ENCODE measurements at regions of chr15 and their contacts with region 1.

Region 1: GRCh38 chr15:95304151-95304946 is 1026.2 kb upstream of the NR2F2 start:
- DNase-seq: peak; percentile 98
- H3K4me3 ChIP-seq: no peak overlapping the region
- H3K27ac ChIP-seq: peak overlapping the region; percentile 97
- H3K4me1 ChIP-seq: peaks cover 52% of the 10 kb centered on the region
- H3K27me3 ChIP-seq: no peaks in the 10 kb centered on the region
- CTCF ChIP-seq: no peak
- POLR2A ChIP-seq: no peak

Region 2: DNA sequence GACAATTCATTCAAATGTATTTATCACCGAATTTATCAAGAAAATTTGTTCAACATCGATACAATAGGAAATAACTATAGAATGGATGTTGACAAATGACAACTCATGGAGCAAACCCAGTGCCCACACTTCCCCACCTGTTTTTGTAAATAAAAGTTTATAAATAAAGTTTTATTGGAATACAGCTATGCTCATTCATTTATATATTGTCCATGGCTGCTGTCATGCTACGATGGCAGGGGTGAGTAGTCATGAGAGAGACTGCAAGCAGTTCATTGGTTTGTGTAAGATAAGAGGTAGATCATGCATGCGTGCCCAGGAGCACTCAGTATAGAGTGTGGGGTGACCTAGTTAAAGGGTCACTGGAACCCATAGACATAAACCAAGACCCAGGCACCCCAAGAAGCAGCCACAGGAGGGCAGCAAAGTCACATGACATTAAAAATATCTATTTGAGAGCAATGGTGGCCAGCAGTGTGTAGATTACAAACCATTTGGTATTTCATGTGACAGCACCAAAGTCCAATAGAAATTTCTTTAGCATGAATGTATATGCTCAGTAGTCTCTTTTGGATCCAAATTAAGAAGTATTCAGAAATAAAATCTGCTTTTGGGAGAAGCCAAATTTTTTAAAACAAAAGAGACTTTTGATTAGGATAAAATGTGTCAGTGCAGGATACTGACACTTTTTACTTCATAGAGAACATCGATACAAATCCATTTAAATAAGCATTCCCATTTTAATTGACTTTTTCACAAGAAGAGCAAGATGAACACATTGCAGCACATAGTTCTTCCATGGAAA is 278.2 kb before region 1 on chr15:
- CTCF ChIA-PET with region 1: interaction called, 4 read pairs
- POLR2A ChIA-PET with region 1: no interaction called
- dilution Hi-C with region 1: no loop called
- intact Hi-C with region 1: loop called (anchors 2 kb)
- DNase-seq: peak; percentile 78
- H3K4me3 ChIP-seq: no peak overlapping the region
- H3K27ac ChIP-seq: no peak overlapping the region
- H3K4me1 ChIP-seq: peaks cover 2% of the 10 kb centered on the region
- H3K27me3 ChIP-seq: no peaks in the 10 kb centered on the region
- CTCF ChIP-seq: peak; percentile 62 to 76
- POLR2A ChIP-seq: no peak

Region 3: GRCh38 chr15:95291898-95292472 is 12.4 kb before region 1 on chr15:
- CTCF ChIA-PET with region 1: interaction called, 4 read pairs
- POLR2A ChIA-PET with region 1: interaction called, 3 read pairs
- dilution Hi-C with region 1: no loop called
- intact Hi-C with region 1: loop called (anchors 1 kb)
- DNase-seq: peak; percentile 61
- H3K4me3 ChIP-seq: no peak overlapping the region
- H3K27ac ChIP-seq: no peak overlapping the region
- H3K4me1 ChIP-seq: peaks cover 55% of the 10 kb centered on the region
- H3K27me3 ChIP-seq: no peaks in the 10 kb centered on the region
- CTCF ChIP-seq: peak; percentile 41 to 58
- POLR2A ChIP-seq: no peak

Region 4: GRCh38 chr15:95429345-95429744 is 125.0 kb after region 1 on chr15:
- CTCF ChIA-PET with region 1: no interaction called
- POLR2A ChIA-PET with region 1: no interaction called
- dilution Hi-C with region 1: no loop called
- intact Hi-C with region 1: no loop called
- DNase-seq: no peak
- H3K4me3 ChIP-seq: no peak overlapping the region
- H3K27ac ChIP-seq: no peak overlapping the region
- H3K4me1 ChIP-seq: no peaks in the 10 kb centered on the region
- H3K27me3 ChIP-seq: no peaks in the 10 kb centered on the region
- CTCF ChIP-seq: no peak
- POLR2A ChIP-seq: no peak

Region 5: GRCh38 chr15:95459273-95459672 is 154.9 kb after region 1 on chr15:
- CTCF ChIA-PET with region 1: no interaction called
- POLR2A ChIA-PET with region 1: no interaction called
- dilution Hi-C with region 1: no loop called
- intact Hi-C with region 1: loop called (anchors 1 kb)
- DNase-seq: peak; percentile 90
- H3K4me3 ChIP-seq: peak overlapping the region in 1 of 3 experiments; percentile 51
- H3K27ac ChIP-seq: peak overlapping the region; percentile 85
- H3K4me1 ChIP-seq: peaks cover 41% of the 10 kb centered on the region
- H3K27me3 ChIP-seq: no peaks in the 10 kb centered on the region
- CTCF ChIP-seq: no peak
- POLR2A ChIP-seq: peak; percentile 65

Region 6: DNA sequence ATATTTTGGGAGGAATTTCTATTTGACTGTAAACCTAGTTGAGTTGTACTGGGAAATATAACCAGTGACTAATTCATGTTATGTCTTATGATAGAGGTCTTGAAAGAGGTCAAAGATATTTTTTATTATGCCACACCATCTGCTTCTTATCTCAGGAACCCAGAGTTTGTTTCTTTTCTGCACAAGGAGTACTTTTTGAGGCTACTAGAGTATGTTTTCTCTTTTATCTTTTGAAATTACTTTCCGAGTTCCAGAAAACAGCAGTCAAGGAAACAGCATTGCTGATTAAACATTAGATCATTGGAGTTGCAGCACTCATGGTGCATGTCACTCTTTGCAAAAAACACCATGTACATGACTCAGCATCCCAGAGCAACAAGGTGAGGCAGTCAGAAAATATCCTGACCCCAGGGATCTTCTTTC is 380.4 kb after region 1 on chr15:
- CTCF ChIA-PET with region 1: no interaction called
- POLR2A ChIA-PET with region 1: no interaction called
- dilution Hi-C with region 1: no loop called
- intact Hi-C with region 1: loop called (anchors 1 kb)
- DNase-seq: peak; percentile 97
- H3K4me3 ChIP-seq: no peak overlapping the region
- H3K27ac ChIP-seq: peak overlapping the region; percentile 66
- H3K4me1 ChIP-seq: peaks cover 22% of the 10 kb centered on the region
- H3K27me3 ChIP-seq: no peaks in the 10 kb centered on the region
- CTCF ChIP-seq: no peak
- POLR2A ChIP-seq: peak; percentile 66

Region 7: DNA sequence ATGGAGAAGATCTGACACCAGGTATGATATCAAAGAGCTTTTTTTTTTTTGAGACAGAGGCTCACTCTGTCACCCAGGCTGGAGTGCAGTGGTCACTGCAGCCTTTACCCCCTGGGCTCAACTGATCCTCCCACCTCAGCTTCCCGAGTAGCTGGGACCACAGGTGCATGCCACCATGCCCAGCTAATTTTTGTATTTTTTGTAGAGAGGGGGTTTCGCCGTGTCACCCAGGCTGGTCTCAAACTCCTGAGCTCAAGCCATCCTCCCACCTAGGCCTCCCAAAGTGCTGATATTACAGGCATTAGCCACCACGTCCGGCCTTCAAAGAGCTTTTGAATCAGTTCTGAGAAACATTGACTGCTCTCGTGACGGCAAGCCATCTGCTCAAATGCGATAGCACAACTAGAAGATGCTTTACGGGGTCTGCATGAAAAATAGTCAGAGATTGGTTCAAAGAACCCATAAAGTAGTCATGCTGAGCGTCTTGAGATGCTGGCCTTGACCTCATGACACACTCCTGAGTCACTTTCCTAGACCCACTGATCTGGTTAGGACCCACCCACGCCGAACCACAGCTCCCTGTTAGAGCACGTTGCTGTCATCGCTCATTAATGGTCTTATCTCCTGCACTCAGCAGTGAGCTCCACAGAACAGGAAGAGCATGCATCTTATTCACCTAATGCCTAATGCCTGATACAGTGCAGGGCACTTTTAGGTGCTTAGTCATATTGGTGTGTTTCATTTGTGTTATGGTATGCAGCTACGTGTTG is 969.2 kb after region 1 on chr15:
- CTCF ChIA-PET with region 1: no interaction called
- POLR2A ChIA-PET with region 1: no interaction called
- dilution Hi-C with region 1: no loop called
- intact Hi-C with region 1: loop called (anchors 1 kb)
- DNase-seq: peak; percentile 94
- H3K4me3 ChIP-seq: no peak overlapping the region
- H3K27ac ChIP-seq: peak overlapping the region; percentile 90
- H3K4me1 ChIP-seq: peaks cover 41% of the 10 kb centered on the region
- H3K27me3 ChIP-seq: no peaks in the 10 kb centered on the region
- CTCF ChIP-seq: no peak
- POLR2A ChIP-seq: peak; percentile 84